WTC11 (cell line): ENCODE measurements at regions of chr7 and their contacts with region 1.

Region 1: DNA sequence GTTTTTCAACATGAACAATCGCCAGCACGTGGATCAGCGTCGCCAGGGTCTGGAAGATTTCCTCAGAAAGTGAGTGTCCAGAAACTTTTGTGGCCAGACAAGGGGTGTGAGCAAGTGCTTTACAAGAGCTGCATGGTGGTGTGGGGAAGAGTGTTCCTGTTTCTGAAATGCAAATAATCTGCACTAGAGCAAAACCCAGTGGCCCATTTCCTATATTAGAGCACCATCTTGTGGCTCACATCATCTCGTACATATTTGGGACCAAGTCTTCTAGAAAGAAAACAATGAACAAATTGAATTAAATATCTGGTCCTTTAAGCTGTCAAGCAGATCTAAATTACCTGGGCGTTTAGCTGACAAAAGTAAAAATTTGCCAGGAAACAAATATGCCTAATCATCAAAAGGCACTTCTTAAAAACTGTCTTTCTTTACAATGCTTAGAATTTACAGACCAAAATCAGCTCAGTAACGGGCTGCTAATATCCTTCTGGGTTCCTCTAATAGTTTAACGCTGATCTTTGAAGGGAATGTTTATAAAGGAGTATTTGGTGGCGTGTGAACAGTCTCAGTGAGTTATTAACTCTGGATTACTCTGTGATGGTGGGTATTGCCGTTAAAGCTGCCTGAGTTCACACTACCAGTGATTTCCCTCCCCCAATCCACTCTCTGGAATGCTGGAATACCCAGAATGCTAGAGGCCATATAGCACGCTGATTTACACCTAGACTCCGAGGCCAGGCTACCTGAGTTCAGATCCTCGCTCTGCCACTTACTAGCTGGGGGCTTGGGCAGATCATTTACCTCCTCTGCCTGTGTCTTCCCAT is 73.6 kb downstream of the SNX10 start:
- DNase-seq: no peak
- ATAC-seq: peak; percentile 82
- H3K4me3 Mint-ChIP-seq: no peak overlapping the region
- H3K27ac Mint-ChIP-seq: no peak overlapping the region
- H3K4me1 Mint-ChIP-seq: peaks cover 9% of the 10 kb centered on the region
- H3K27me3 Mint-ChIP-seq: no peaks in the 10 kb centered on the region
- CTCF ChIP-seq: peak; percentile 51

Region 2: DNA sequence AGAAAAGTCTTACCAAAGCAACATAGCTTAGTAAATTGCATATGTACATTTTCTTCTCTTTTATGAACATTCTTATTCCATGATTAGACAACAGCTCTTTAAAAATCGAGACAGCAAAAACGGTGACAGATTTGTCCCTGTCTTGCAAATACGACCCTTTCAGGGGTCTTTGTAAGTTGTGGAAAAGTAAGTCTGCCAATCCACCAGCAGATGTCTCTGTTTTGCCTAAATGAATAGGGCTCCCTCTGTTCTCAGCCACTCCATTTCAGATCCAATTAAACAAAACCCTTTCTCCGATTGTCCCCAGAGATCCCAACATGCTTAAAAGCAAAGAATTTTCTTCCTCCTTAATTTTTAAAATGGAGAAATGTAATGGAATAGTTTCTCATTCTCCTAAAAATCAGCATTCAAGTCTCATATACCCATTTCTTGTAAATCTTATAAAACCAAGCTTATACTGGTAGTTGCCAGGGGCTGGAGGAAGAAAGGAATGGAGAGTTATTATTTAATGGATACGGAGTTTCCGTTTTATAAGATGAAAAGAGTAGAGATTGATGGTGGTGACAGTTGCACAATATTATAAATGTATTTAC is 274.3 kb before region 1 on chr7:
- CTCF ChIA-PET with region 1: interaction called, 15 read pairs
- POLR2A ChIA-PET with region 1: no interaction called
- DNase-seq: no peak
- ATAC-seq: peak; percentile 78
- H3K4me3 Mint-ChIP-seq: peak overlapping the region; percentile 52
- H3K27ac Mint-ChIP-seq: peak overlapping the region; percentile 91
- H3K4me1 Mint-ChIP-seq: peaks cover 21% of the 10 kb centered on the region
- H3K27me3 Mint-ChIP-seq: no peaks in the 10 kb centered on the region
- CTCF ChIP-seq: peak; percentile 26; the same call in 1 of the 2 replicates

Region 3: GRCh38 chr7:26398756-26399501 is 33.6 kb after region 1 on chr7:
- CTCF ChIA-PET with region 1: interaction called, 14 read pairs
- POLR2A ChIA-PET with region 1: no interaction called
- DNase-seq: peak; percentile 56
- ATAC-seq: peak; percentile 50
- H3K4me3 Mint-ChIP-seq: peak overlapping the region; percentile 93
- H3K27ac Mint-ChIP-seq: peak overlapping the region; percentile 65
- H3K4me1 Mint-ChIP-seq: peaks cover 25% of the 10 kb centered on the region
- H3K27me3 Mint-ChIP-seq: peaks cover 10% of the 10 kb centered on the region
- CTCF ChIP-seq: no peak

Region 4: GRCh38 chr7:26520483-26520882 is 155.2 kb after region 1 on chr7:
- CTCF ChIA-PET with region 1: interaction called, 10 read pairs
- POLR2A ChIA-PET with region 1: no interaction called
- DNase-seq: no peak
- ATAC-seq: no peak
- H3K4me3 Mint-ChIP-seq: no peak overlapping the region
- H3K27ac Mint-ChIP-seq: no peak overlapping the region
- H3K4me1 Mint-ChIP-seq: no peaks in the 10 kb centered on the region
- H3K27me3 Mint-ChIP-seq: no peaks in the 10 kb centered on the region; the same call in 1 of the 2 replicates
- CTCF ChIP-seq: no peak

Region 5: DNA sequence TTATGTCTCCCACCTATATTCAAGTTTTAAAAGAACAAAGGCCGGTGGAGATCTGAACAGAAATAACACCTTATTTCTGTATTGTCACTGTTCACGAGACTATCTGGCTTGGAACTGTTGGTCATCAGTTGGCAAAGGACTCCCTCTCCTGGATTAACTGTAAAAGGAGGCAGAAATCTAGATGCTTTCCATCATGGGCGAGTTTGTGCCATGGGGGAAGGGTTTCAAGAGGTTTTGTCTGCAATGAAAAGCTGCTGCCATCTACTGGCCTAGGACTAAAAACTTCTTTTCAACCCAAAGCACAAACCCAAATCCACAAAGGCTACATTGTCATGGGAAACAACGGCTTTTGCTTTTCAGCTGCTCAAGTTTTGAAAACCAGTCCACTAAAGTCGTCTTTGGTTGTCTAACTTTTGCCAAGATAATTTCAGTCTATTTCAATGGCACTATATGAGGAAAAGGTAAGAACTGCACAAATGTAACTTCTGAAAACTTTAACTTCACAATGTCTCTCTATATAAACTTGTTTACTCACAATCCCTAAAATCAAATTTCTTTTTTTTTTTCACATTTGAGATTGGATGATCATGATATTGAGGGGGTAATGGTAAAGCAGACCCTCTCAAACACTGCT is 302.3 kb after region 1 on chr7:
- CTCF ChIA-PET with region 1: interaction called, 87 read pairs
- POLR2A ChIA-PET with region 1: no interaction called
- DNase-seq: peak; percentile 68
- ATAC-seq: peak; percentile 97
- H3K4me3 Mint-ChIP-seq: no peak overlapping the region
- H3K27ac Mint-ChIP-seq: no peak overlapping the region
- H3K4me1 Mint-ChIP-seq: peaks cover 14% of the 10 kb centered on the region
- H3K27me3 Mint-ChIP-seq: no peaks in the 10 kb centered on the region
- CTCF ChIP-seq: peak; percentile 43